Activated CD8-positive, alpha-beta T cell treated with anti-CD3 and anti-CD28 coated beads, Interleukin-2, amount 10 ng/mL, durations not matched to agents 7 days and 5 days (primary cell): ENCODE measurements at regions of chr11 and their contacts with region 1.

Region 1: DNA sequence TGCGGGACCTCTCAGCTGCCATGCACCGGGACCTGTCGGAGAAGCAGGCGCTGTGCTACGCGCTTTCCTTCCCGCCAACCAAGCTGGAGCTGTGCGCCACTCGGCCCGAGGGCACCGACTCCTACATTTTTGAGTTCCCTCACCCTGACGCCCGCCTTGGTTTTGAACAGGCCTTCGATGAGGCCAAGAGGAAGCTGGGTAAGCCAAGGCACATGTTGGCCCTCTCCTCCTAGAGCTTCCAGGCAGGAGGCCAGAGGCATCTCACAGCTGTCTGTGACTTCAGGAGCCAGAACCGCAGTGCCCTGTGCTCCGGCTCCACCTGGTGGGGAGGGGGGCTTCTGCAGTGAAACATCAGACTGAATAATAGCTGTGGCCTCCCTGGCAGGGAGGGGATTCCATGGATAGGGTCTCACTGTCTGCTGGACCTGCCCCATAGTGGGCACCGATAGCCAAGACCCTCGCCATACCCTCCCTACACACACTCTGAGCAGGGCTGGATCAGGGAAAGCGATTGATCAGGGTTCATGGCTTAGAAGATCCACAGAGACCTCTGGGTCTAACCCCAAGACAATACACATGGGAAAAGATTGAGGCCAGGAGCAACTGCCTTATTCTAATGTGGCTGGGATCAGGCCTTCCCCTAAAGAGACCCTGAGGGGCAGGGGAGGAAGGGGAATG is 15.7 kb upstream of the RELT start:
- DNase-seq: peak; percentile 49
- ATAC-seq: peak; percentile 37
- H3K4me3 Mint-ChIP-seq: no peak overlapping the region
- H3K27ac Mint-ChIP-seq: no peak overlapping the region
- H3K4me1 Mint-ChIP-seq: peaks cover 10% of the 10 kb centered on the region
- H3K27me3 Mint-ChIP-seq: no peaks in the 10 kb centered on the region

Region 2: DNA sequence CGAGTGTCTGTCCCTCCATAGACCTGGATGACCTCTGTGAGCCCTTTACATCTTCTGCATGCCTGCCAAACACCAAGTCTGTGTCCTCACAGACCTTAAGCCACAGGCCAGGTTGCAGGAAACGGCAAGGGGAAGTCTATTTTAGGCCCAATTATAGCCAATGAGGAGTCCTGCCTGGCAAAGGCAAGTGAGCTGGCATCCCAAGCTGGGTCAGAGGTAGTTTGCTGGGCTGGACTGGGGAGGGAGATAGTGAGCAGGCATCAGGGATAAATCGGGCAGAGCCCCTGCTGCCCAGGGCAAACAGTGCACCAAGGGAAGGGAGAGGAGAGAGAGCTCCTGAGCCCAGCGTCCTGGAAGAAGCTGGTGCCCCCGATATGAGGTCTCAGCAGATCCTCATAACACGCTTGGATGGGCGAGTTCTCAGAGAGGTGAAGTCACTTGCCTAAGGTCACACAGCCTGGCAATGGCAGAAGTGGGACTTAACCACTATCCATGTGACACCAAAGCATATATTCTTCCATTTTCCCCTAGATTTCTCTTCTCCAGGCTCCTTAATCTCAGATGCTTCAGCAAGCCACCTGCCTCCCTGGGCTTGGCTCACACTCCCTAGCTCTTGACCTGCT is 12.0 kb after region 1 on chr11:
- CTCF ChIA-PET with region 1: interaction called, 16 read pairs
- POLR2A ChIA-PET with region 1: interaction called, 5 read pairs
- DNase-seq: no peak
- ATAC-seq: no peak
- H3K4me3 Mint-ChIP-seq: no peak overlapping the region
- H3K27ac Mint-ChIP-seq: peak overlapping the region; percentile 58
- H3K4me1 Mint-ChIP-seq: peaks cover 36% of the 10 kb centered on the region
- H3K27me3 Mint-ChIP-seq: no peaks in the 10 kb centered on the region

Region 3: DNA sequence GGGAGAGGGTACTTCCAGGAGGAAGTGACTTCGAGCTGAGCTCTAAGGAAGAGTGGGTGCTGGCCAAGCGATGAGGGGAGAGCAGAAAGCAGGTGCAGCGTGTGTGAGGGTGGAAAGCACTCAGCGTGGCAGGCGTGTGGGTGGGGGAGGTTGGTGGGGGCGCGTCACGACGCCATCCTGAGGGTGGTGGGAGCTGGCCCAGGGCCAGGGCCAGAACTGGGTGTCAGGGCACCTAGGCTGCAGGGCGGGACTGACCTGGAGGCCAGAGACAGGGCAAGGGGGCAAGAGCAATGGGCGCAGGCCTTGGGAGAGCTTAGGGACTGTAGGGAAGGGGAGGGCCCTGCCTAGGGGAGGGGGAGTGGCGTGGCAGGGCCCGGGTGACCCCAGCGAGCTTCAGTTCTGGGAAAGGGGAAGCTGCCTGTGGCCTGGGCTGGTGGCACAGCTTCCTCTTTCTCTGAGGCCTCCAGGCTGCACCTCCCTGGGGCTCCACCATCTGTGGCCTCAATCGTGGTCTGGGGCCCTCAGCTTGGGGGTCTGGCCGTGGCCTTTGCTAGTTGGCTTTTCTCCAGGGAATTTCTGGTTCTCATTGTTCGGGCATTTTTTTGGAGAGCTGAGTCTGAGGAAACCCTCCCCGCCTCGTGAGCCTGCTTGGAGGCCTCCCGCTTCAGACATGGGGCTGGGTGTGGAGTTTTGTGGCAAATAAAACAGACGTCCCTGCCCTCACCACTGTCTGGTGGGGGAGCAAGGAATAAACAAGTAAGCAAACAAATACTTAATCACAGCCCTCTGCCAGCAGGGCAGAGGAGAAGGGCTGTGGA is 24.6 kb after region 1 on chr11:
- CTCF ChIA-PET with region 1: interaction called, 25 read pairs
- POLR2A ChIA-PET with region 1: no interaction called
- DNase-seq: peak; percentile 71
- ATAC-seq: peak; percentile 68
- H3K4me3 Mint-ChIP-seq: peak overlapping the region; percentile 65
- H3K27ac Mint-ChIP-seq: peak overlapping the region; percentile 94
- H3K4me1 Mint-ChIP-seq: peaks cover 88% of the 10 kb centered on the region
- H3K27me3 Mint-ChIP-seq: no peaks in the 10 kb centered on the region

Region 4: DNA sequence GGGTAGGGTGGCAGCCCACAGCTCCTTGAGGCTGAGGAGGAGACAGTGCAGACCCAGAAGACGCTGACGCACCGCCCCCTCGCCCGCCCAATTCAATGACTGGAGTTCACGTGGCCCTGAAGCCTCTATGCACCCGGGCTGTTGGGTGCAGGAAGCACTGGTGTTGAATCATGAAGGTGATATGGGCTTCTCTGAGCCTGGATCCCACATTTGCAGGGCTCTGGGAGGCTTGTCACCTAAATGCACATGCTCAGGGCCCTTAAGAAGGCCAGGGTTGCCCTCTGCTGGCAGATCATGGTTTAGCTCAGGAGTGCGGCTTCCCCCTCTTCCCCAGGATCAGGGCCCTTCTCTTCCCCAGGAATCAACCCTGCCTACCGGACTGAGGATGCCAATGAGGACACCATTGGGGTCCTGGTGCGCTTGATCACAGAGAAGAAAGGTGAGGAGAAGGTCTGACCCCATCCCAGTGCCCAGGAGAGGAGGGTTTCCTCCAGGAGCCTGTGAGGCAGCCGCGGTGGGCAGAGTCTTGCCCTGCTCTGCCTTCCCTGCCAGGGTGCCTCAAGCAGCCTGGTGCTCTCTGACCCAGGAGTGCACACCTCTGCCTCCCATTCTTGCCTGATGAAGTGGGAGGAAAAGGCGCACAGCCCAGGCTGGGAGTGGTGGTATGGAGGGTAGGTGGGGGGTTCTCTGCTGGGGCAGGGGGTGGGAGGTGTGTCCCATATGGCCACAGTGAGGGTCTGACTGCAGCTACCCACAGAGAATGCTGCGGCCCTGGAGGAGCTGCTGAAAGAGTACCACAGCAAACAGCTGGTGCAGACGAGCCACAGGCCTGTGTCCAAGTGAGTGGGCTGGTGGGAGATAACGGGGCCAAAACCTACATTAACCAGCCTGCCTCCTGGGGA is 33.3 kb after region 1 on chr11:
- CTCF ChIA-PET with region 1: interaction called, 18 read pairs
- POLR2A ChIA-PET with region 1: no interaction called
- DNase-seq: peak; percentile 80
- ATAC-seq: peak; percentile 76
- H3K4me3 Mint-ChIP-seq: no peak overlapping the region
- H3K27ac Mint-ChIP-seq: peak overlapping the region; percentile 69
- H3K4me1 Mint-ChIP-seq: peaks cover 17% of the 10 kb centered on the region
- H3K27me3 Mint-ChIP-seq: no peaks in the 10 kb centered on the region